SK-N-SH (cell line): ENCODE measurements at regions of chr2 and their contacts with region 1.

Region 1: DNA sequence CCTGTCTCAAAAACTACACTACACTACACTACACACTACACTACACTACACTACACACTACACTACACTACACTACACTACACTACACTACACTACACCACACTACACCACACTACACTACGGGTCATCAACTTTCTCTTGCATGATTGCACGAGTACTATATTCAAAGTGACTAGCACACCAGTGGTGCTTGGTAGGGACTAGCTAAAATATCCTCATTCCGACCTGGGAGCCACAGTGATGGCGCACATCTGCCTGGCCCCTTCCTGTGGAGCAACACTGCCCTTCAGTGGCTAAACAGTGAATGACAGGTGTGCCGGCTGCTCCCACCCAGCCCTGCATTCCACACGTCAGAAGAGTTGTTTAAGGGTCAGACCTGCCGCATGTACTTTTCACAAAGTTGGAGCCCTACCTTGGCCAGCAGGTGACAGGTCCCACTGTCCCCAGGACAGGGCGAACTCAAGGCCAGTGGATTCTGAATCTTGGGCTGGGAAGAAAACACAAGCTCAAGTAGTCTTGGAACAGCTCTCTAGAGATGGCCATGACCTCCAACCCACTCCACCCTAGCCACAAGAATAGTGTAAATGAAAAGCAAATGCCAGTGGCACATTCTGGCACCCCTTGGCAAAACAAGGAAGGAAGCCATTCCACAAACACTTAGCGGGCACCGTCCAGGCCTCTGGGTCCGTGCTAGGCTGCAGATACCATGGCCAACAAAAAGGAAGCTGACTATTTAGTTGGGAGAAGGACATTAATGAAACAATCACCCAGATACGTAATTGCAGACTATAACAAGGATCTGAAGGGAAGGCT is 79.7 kb upstream of the MSH2 start:
- DNase-seq: peak; percentile 87
- H3K4me3 ChIP-seq: no peak overlapping the region; a peak in 1 of 4 replicates
- H3K27ac ChIP-seq: no peak overlapping the region
- H3K4me1 ChIP-seq: peaks cover 2 to 17% of the 10 kb centered on the region in 2 experiments; a peak in 1 of 4 replicates
- H3K27me3 ChIP-seq: no peaks in the 10 kb centered on the region
- CTCF ChIP-seq: peak; percentile 99
- EP300 ChIP-seq: no peak
- RAD21 ChIP-seq: peak; percentile 100

Region 2: GRCh38 chr2:46899053-46899452 is 424.2 kb before region 1 on chr2:
- CTCF ChIA-PET with region 1: interaction called, 13 read pairs
- POLR2A ChIA-PET with region 1: no interaction called
- DNase-seq: no peak
- H3K4me3 ChIP-seq: no peak overlapping the region
- H3K27ac ChIP-seq: no peak overlapping the region
- H3K4me1 ChIP-seq: peaks cover 0 to 7% of the 10 kb centered on the region in 2 experiments; a peak in 2 of 4 replicates
- H3K27me3 ChIP-seq: no peaks in the 10 kb centered on the region
- CTCF ChIP-seq: no peak
- EP300 ChIP-seq: no peak
- RAD21 ChIP-seq: no peak

Region 3: DNA sequence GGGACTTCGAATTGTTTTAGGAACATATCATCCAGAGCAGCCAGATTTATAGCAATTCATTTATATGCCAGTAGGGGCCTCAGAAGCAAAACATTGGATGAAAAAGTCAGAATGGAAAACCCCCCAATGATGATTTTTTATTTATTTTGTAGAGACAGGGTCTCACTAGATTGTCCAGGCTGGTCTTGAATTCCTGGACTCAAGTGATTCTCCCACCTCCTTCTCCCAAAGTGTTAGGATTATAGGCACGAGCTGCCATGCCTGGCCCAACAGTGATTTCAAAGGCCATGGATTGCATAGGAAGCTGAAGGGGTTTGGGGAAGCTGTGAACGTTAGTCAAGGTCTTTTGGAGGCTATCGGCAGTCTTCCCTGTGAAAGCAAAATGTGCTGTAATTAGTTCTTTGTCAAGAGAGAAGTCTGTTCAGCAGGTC is 385.7 kb before region 1 on chr2:
- CTCF ChIA-PET with region 1: interaction called, 19 read pairs
- POLR2A ChIA-PET with region 1: no interaction called
- DNase-seq: no peak
- H3K4me3 ChIP-seq: no peak overlapping the region
- H3K27ac ChIP-seq: no peak overlapping the region
- H3K4me1 ChIP-seq: peaks cover 10% of the 10 kb centered on the region in 2 experiments; a peak in 2 of 4 replicates
- H3K27me3 ChIP-seq: no peaks in the 10 kb centered on the region
- CTCF ChIP-seq: peak; percentile 62
- EP300 ChIP-seq: no peak
- RAD21 ChIP-seq: peak; percentile 36; the same call in 1 of the 2 replicates

Region 4: DNA sequence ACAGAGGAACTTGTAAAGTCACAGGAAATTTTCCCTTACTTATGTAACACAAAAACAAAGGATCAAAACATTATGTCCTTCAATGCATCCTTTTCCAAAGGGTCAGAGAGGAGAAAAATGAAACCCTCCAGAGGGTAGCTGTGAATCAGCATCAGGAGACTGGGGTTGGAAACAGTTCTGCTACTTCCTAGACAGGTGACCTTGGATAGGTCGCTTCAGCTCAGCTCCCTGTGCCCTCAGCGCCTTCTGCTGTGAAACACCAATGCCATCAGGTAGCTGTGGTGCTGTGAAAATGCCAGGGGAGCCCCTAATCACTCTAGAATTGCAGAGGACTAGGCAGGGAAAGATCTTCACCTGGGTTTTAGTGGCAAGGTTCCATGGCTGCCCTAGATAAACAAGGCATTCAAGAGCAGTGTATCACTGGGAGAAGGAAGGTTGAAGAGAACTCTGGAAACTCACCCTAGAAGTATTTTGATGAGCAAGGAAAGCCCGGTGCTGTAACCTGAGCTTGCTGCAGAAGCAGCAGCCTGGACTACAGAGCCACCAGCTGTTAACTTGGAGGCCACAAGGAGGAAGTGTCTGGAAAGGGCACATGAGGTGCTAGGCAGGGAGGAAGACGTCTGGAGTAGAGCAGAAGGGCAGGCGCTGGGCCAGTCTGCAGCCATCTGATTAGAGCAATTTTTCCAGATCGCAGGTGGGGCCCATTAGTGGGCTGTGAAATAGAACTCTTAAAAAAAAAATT is 306.9 kb before region 1 on chr2:
- CTCF ChIA-PET with region 1: interaction called, 17 read pairs
- POLR2A ChIA-PET with region 1: interaction called, 3 read pairs
- DNase-seq: no peak
- H3K4me3 ChIP-seq: no peak overlapping the region
- H3K27ac ChIP-seq: peak overlapping the region; percentile 84 to 86
- H3K4me1 ChIP-seq: peaks cover 21 to 56% of the 10 kb centered on the region in 2 experiments
- H3K27me3 ChIP-seq: no peaks in the 10 kb centered on the region
- CTCF ChIP-seq: peak; percentile 50
- EP300 ChIP-seq: peak in 1 of 2 experiments; percentile 85; a peak in 2 of 4 replicates
- RAD21 ChIP-seq: peak; percentile 27

Region 5: GRCh38 chr2:47076586-47077441 is 246.4 kb before region 1 on chr2:
- CTCF ChIA-PET with region 1: interaction called, 17 read pairs
- POLR2A ChIA-PET with region 1: no interaction called
- DNase-seq: peak; percentile 62
- H3K4me3 ChIP-seq: no peak overlapping the region
- H3K27ac ChIP-seq: peak overlapping the region; percentile 97 to 98
- H3K4me1 ChIP-seq: peaks cover 35 to 85% of the 10 kb centered on the region in 2 experiments; a peak in 3 of 4 replicates
- H3K27me3 ChIP-seq: no peaks in the 10 kb centered on the region
- CTCF ChIP-seq: no peak
- EP300 ChIP-seq: peak in 1 of 2 experiments; percentile 93; a peak in 2 of 4 replicates
- RAD21 ChIP-seq: no peak

Region 6: GRCh38 chr2:47300609-47301276 is 22.5 kb before region 1 on chr2:
- CTCF ChIA-PET with region 1: interaction called, 20 read pairs
- POLR2A ChIA-PET with region 1: no interaction called
- DNase-seq: no peak
- H3K4me3 ChIP-seq: no peak overlapping the region
- H3K27ac ChIP-seq: no peak overlapping the region
- H3K4me1 ChIP-seq: peaks cover 2 to 5% of the 10 kb centered on the region in 2 experiments; a peak in 3 of 4 replicates
- H3K27me3 ChIP-seq: no peaks in the 10 kb centered on the region
- CTCF ChIP-seq: no peak
- EP300 ChIP-seq: no peak
- RAD21 ChIP-seq: no peak

Region 7: GRCh38 chr2:47386551-47386950 is 63.3 kb after region 1 on chr2:
- CTCF ChIA-PET with region 1: interaction called, 27 read pairs
- POLR2A ChIA-PET with region 1: no interaction called
- DNase-seq: no peak
- H3K4me3 ChIP-seq: no peak overlapping the region
- H3K27ac ChIP-seq: no peak overlapping the region
- H3K4me1 ChIP-seq: no peaks in the 10 kb centered on the region; a peak in 1 of 4 replicates
- H3K27me3 ChIP-seq: no peaks in the 10 kb centered on the region
- CTCF ChIP-seq: no peak
- EP300 ChIP-seq: no peak
- RAD21 ChIP-seq: no peak

Region 8: GRCh38 chr2:47471429-47472116 is 148.4 kb after region 1 on chr2:
- CTCF ChIA-PET with region 1: no interaction called
- POLR2A ChIA-PET with region 1: no interaction called
- DNase-seq: no peak
- H3K4me3 ChIP-seq: no peak overlapping the region
- H3K27ac ChIP-seq: no peak overlapping the region
- H3K4me1 ChIP-seq: no peaks in the 10 kb centered on the region
- H3K27me3 ChIP-seq: no peaks in the 10 kb centered on the region
- CTCF ChIP-seq: no peak
- EP300 ChIP-seq: no peak
- RAD21 ChIP-seq: no peak